ENCODE measurements at regions of chr19 and their contacts with region 1.

Region 1: DNA sequence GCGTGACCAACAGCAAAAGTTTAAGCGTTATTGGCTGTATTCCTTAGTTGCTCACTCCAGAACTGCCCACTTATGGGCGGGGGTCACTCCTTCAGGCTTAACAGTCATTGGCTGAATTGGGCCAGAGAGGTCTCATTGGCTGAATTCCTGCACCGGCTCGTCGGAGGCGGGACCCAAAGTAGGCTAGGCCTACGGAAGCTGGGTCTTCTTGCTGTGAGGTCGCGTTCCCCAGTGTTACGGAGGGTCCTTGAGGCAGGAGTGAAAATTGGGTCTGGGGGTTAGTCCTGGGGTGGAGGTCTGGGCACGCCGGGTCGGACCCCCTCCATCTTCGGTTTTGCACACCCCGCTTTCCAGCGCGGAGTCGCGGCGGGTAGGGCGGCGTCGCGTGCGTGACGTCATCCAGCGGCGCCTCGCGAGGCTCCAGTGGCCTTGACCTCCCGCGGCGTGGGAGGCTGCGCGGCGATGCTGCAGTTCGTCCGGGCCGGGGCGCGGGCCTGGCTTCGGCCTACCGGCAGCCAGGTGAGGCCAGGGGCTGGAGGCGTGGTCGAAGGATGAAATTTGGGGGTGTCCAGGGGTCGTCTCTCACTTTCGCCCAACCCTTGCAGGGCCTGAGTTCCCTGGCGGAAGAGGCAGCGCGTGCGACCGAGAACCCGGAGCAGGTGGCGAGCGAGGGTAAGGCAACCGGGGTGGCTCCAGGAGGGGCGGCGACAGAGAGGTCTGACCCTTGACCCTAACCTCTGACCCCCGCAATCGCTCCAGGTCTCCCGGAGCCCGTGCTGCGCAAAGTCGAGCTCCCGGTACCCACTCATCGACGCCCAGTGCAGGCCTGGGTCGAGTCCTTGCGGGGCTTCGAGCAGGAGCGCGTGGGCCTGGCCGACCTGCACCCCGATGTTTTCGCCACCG is at the start of gene MRPL4:
- DNase-seq: peak; percentile 99
- ATAC-seq: peak; percentile 99
- H3K4me3 Mint-ChIP-seq: peak within 1 kb of the TSS; percentile 87
- H3K27ac Mint-ChIP-seq: peak within 1 kb of the TSS; percentile 95
- H3K4me1 Mint-ChIP-seq: peaks cover 32% of the 10 kb centered on the region
- H3K27me3 Mint-ChIP-seq: no peaks in the 10 kb centered on the region
- total RNA-seq, gene MRPL4: 85.9 to 87.0 TPM

Region 2: GRCh38 chr19:10142701-10143375 is 109.2 kb before region 1 on chr19:
- CTCF ChIA-PET with region 1: interaction called, 17 read pairs
- POLR2A ChIA-PET with region 1: interaction called, 3 read pairs
- DNase-seq: peak; percentile 69
- ATAC-seq: peak; percentile 89
- H3K4me3 Mint-ChIP-seq: peak overlapping the region; percentile 55
- H3K27ac Mint-ChIP-seq: peak overlapping the region; percentile 90
- H3K4me1 Mint-ChIP-seq: peaks cover 49% of the 10 kb centered on the region
- H3K27me3 Mint-ChIP-seq: no peaks in the 10 kb centered on the region

Region 3: DNA sequence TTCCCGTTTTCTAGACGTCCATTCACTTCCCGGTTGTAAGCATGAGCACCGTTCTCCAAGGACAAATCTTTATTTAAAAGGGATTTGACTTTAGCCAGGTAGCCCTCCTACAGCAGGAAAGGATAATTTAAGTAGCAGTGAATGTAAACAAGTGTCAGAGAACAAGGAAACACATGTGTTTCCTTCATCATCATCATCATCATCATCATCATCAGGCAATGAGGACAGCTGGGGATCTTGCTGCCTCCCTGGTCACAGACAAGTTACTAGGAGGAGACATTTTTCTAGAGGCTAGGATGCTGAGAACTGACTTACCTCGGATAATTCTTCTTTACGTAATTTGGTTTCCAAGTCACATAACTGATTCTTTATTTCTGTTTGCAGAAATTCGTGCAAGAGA is 71.6 kb before region 1 on chr19:
- CTCF ChIA-PET with region 1: interaction called, 14 read pairs
- POLR2A ChIA-PET with region 1: interaction called, 3 read pairs
- DNase-seq: no peak
- ATAC-seq: no peak
- H3K4me3 Mint-ChIP-seq: no peak overlapping the region
- H3K27ac Mint-ChIP-seq: no peak overlapping the region
- H3K4me1 Mint-ChIP-seq: peaks cover 7% of the 10 kb centered on the region
- H3K27me3 Mint-ChIP-seq: no peaks in the 10 kb centered on the region

Region 4: DNA sequence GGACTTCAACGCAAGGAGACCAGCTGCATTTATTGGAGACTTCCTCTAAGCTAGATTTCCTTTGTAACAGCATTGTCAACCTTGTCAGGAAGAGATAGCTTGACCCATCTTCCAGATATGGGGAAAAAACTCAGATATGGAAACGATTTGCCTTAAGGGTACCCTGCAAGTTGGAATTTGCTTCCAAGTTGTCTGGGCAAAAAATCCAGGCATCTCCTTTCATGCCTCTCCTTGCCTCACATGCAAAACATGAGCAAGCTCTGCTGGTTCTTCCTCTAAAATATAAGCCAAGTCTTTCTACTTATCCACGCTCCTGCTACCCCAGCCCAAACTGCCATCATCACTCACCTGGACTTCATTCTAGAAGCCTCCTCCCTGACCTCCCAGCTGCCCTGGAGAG is 50.9 kb before region 1 on chr19:
- CTCF ChIA-PET with region 1: interaction called, 33 read pairs
- POLR2A ChIA-PET with region 1: interaction called, 6 read pairs
- DNase-seq: no peak
- ATAC-seq: no peak
- H3K4me3 Mint-ChIP-seq: no peak overlapping the region
- H3K27ac Mint-ChIP-seq: no peak overlapping the region
- H3K4me1 Mint-ChIP-seq: peaks cover 14% of the 10 kb centered on the region
- H3K27me3 Mint-ChIP-seq: no peaks in the 10 kb centered on the region

Region 5: GRCh38 chr19:10230861-10231611 is 21.0 kb before region 1 on chr19 and contains the start of gene S1PR2:
- CTCF ChIA-PET with region 1: interaction called, 62 read pairs
- POLR2A ChIA-PET with region 1: interaction called, 8 read pairs
- DNase-seq: peak; percentile 68
- ATAC-seq: peak; percentile 69
- H3K4me3 Mint-ChIP-seq: peak within 1 kb of the TSS; percentile 83
- H3K27ac Mint-ChIP-seq: peak within 1 kb of the TSS; percentile 78
- H3K4me1 Mint-ChIP-seq: peaks cover 21% of the 10 kb centered on the region
- H3K27me3 Mint-ChIP-seq: no peaks in the 10 kb centered on the region
- total RNA-seq, gene S1PR2: 3.5 to 3.8 TPM

Measured in activated CD8-positive, alpha-beta T cell treated with anti-CD3 and anti-CD28 coated beads, Interleukin-2, amount 10 ng/mL, durations not matched to agents 7 days and 5 days (primary cell).